ENCODE measurements at regions of chr12 and their contacts with region 1.

Region 1: GRCh38 chr12:54579696-54580333 is 8.6 kb downstream of the PPP1R1A start:
- DNase-seq: no peak
- H3K4me3 ChIP-seq: no peak overlapping the region
- CTCF ChIP-seq: peak; percentile 99

Region 2: DNA sequence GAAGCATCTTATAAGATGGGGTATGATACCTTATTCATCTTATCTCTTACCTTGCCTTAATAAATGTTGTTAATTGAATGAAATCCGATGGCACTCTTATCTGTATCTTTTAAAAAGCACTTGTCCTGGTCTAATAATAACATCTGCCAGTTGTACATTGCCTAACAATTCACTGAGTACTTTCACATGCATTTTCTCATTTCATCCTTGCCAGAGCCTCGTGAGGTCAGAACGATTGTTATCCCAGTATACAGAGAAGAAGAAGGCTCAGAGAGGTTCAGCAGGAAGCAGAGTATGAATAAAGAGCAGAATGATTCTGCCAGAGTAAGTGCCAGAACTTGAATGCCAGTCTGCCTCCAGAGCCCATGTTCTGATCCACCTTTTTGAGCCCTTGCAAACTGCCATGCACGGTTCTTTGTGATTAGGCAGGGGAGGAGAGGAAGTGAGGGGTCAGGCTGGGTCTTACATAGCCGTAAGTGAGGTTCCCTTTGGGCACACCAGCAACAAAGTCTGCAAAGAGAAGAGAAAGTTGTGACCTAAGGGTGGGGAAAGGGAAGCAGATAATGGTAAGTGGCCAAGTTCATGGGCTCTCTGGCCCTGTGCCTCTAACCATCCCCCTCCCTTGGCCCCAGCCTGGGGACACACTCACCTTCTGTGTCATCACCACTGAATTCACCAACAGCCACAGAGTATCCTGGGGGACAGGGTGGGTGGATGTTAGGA is 172.5 kb before region 1 on chr12:
- CTCF ChIA-PET with region 1: no interaction called
- POLR2A ChIA-PET with region 1: no interaction called
- DNase-seq: no peak
- H3K4me3 ChIP-seq: no peak overlapping the region
- CTCF ChIP-seq: no peak

Region 3: GRCh38 chr12:54560374-54560858 is 19.4 kb before region 1 on chr12:
- CTCF ChIA-PET with region 1: interaction called, 50 read pairs
- POLR2A ChIA-PET with region 1: no interaction called
- DNase-seq: no peak
- H3K4me3 ChIP-seq: peak overlapping the region; percentile 26
- CTCF ChIP-seq: no peak

Region 4: GRCh38 chr12:54596526-54596946 is 16.7 kb after region 1 on chr12:
- CTCF ChIA-PET with region 1: interaction called, 81 read pairs
- POLR2A ChIA-PET with region 1: no interaction called
- DNase-seq: no peak
- H3K4me3 ChIP-seq: no peak overlapping the region
- CTCF ChIP-seq: peak; percentile 75

Region 5: GRCh38 chr12:54603173-54603814 is 23.5 kb after region 1 on chr12:
- CTCF ChIA-PET with region 1: interaction called, 81 read pairs
- POLR2A ChIA-PET with region 1: no interaction called
- DNase-seq: no peak
- H3K4me3 ChIP-seq: no peak overlapping the region
- CTCF ChIP-seq: peak; percentile 72

Region 6: DNA sequence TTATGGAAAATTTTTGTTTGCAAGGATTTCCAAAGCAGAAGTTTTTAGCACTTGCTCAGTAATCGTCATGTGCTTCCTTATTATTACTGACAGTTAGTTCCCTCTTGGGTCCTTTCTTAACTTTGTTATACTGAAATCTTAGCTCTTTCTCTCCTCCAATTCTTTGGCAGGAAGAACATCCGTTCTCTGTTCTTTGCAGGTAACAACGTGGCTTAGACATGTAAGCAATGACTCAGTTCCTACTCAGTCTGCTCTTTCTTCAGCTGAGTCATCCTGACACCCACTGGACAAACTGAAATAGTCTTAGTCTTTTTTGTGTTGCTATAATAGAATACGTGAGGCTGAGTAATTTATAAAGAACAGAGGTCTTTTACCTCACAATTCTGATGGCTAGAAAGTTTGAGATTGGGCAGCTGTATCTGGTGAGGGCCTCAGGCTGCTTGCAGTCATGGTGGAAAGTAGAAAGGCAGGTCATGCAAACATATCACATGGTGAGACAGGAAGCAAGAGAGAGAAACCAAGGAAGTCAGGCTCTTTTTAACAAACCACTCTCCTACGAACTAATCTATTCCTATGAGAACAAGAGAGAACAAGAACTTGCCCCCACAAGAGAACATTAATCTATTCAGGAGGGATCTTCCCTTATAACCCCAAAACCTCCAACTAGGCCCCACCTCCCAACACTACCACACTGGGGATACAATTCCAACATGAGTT is 355.6 kb after region 1 on chr12:
- CTCF ChIA-PET with region 1: no interaction called
- POLR2A ChIA-PET with region 1: no interaction called
- DNase-seq: peak; percentile 44
- H3K4me3 ChIP-seq: no peak overlapping the region
- CTCF ChIP-seq: no peak